ENCODE measurements at regions of chr11 and their contacts with region 1.

Region 1: DNA sequence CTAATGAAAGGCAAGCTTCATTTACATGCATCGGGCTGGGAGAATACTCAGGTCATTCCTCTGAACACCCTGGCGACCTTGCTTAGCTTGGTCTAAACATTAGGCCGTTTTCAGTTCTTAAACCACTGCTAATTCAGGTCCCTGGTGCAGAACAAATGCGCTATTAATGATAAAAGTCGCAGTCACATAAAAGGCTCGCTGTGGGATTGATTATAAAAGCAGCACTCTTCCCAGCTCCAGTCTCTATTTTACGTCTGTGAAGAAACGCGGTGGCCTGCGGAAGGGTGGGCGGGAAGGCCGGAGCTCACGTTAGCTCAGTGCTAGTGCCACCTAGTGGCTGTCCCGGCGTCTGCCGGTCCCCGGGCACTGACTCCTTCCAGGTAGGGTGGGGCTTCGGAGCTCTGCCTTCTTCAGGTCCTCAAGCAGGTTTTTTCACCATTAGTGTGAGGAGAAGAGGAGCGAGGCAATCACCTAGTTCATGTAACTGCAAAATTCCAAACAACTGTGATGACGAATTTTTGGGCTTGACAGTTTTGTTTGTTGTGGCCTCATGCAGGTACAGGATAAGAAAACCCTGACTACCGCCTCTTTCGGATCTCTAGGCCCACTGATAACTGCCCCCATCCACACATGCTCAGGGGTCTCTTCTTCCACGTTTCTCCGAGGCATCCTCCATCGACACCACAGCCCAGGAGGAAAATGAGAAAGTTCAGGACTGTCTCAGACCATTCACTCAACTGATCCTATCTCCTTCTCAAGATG is 66.5 kb upstream of the CLMP start:
- DNase-seq: no peak
- H3K4me3 ChIP-seq: 0 out of 2 replicates have a peak overlapping the region, but pooled peaks have one; percentile 8
- CTCF ChIP-seq: peak; percentile 94

Region 2: DNA sequence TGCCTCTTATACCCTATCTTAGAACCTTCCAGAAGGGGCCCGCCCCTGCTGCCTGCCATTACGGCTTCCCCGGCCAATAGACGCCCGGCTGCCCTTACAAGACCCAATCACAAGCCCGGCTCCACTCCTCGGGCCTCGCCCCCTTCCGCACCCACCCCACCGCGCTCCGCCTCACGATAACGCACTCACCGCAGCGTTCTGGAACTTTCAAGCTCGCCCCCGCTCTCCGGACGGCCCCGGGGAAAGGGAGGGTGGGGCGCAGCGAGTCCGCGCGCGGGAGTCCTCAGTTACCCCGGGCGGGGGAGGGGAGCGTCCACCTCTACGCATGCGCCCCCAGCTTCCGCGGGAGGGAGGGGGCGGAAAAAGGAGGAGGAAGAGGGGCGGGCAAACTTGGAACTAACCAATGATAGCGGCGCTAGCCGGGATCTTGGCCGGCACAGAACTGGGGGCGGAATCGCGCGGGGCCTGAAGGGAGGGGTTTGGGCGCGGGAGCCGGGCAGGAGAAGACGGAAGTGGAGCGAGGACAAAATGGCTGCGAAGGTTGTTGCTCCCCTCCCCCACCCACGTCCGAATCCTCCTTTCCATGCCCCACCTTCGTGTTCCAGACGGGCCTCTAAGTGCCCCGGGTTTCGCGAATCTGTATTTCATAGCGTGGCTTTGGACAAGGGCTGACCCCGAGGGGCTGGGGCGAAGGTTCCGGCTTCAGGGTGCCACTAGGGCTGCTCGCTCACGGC is 199.2 kb before region 1 on chr11:
- CTCF ChIA-PET with region 1: interaction called, 22 read pairs
- POLR2A ChIA-PET with region 1: interaction called, 6 read pairs
- DNase-seq: peak; percentile 99
- H3K4me3 ChIP-seq: peak overlapping the region; percentile 97
- CTCF ChIP-seq: no peak

Region 3: GRCh38 chr11:123122341-123122740 is 139.2 kb before region 1 on chr11:
- CTCF ChIA-PET with region 1: interaction called, 605 read pairs
- POLR2A ChIA-PET with region 1: no interaction called
- DNase-seq: no peak
- H3K4me3 ChIP-seq: no peak overlapping the region
- CTCF ChIP-seq: no peak

Region 4: GRCh38 chr11:123166071-123166559 is 95.4 kb before region 1 on chr11:
- CTCF ChIA-PET with region 1: interaction called, 23 read pairs
- POLR2A ChIA-PET with region 1: no interaction called
- DNase-seq: peak; percentile 75
- H3K4me3 ChIP-seq: no peak overlapping the region
- CTCF ChIP-seq: peak; percentile 75

Region 5: GRCh38 chr11:123235117-123235655 is 26.3 kb before region 1 on chr11:
- CTCF ChIA-PET with region 1: interaction called, 15 read pairs
- POLR2A ChIA-PET with region 1: no interaction called
- DNase-seq: no peak
- H3K4me3 ChIP-seq: no peak overlapping the region
- CTCF ChIP-seq: peak; percentile 45

Region 6: GRCh38 chr11:123429913-123430720 is 168.6 kb after region 1 on chr11 and contains the start of gene GRAMD1B:
- CTCF ChIA-PET with region 1: no interaction called
- POLR2A ChIA-PET with region 1: no interaction called
- DNase-seq: peak; percentile 71
- H3K4me3 ChIP-seq: peak within 1 kb of the TSS; percentile 89
- CTCF ChIP-seq: peak; percentile 44

Region 7: DNA sequence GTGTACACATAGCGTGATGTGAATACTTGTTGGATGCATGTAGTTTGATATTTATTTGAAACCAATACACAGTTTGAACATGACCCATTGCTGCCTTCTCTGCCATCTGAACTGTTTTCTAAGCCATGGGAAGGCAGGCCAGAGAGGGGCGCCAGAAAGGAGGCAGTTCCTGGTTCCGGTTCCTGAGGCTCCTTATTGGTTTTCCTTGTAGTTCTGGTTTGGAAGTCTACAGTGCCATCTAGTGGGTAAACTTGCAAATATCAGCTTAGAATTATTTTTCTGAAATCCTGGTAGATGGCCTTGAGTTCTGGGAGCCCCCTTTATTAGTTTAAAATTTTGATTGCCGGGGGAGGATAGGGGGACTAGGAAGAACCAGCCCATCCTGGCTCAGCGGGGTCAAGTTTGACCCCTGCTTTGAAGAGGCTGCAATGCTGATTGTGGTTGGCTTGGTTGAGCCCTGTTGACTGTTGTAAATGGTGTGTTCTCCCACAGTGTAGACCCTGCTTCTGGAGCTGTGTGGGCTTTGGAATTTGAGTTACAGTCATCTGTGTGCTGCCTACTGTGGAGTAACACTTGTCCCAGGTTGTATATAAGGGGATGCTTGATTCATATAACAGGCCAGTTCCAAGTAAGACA is 216.9 kb after region 1 on chr11:
- CTCF ChIA-PET with region 1: interaction called, 20 read pairs
- POLR2A ChIA-PET with region 1: interaction called, 4 read pairs
- DNase-seq: peak; percentile 41
- H3K4me3 ChIP-seq: no peak overlapping the region
- CTCF ChIP-seq: peak; percentile 53

Region 8: DNA sequence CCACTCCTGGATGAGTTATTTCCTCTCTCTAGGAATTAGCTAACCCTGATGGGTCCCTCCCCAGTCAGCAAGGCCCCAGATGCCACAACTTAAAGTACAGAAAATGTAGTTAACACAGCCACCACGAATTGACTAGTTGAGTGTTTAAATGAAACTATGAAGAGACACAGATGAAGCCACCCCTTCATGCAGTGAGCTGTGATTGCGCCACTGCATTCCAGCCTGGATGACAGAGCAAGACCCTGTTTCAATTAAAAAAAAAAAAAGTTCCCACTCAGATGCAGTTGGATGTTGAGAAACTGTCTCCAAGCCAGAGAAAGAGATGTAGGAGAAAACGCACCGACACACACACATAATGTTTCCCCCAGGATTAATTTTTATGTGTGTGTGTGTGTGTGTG is 339.6 kb after region 1 on chr11:
- CTCF ChIA-PET with region 1: no interaction called
- POLR2A ChIA-PET with region 1: no interaction called
- DNase-seq: peak; percentile 42
- H3K4me3 ChIP-seq: no peak overlapping the region
- CTCF ChIP-seq: no peak

Measured in AG04449 (cell line).